ENCODE measurements at regions of chr16 and their contacts with region 1.

Region 1: GRCh38 chr16:11797166-11797956 is at the start of gene ZC3H7A:
- DNase-seq: peak; percentile 99
- H3K4me3 ChIP-seq: peak within 1 kb of the TSS; percentile 76 to 97 (median 94)
- H3K27ac ChIP-seq: peak within 1 kb of the TSS; percentile 98 to 99 (median 99)
- H3K4me1 ChIP-seq: peaks cover 61 to 73% (median 65%) of the 10 kb centered on the region in 4 donors
- H3K27me3 ChIP-seq: no peaks in the 10 kb centered on the region
- CTCF ChIP-seq: peak; percentile 86 to 97 (median 92)
- EP300 ChIP-seq: no peak
- POLR2A ChIP-seq: peak; percentile 85
- total RNA-seq, gene ZC3H7A: 51.1 to 61.0 (median 61.0) TPM

Region 2: DNA sequence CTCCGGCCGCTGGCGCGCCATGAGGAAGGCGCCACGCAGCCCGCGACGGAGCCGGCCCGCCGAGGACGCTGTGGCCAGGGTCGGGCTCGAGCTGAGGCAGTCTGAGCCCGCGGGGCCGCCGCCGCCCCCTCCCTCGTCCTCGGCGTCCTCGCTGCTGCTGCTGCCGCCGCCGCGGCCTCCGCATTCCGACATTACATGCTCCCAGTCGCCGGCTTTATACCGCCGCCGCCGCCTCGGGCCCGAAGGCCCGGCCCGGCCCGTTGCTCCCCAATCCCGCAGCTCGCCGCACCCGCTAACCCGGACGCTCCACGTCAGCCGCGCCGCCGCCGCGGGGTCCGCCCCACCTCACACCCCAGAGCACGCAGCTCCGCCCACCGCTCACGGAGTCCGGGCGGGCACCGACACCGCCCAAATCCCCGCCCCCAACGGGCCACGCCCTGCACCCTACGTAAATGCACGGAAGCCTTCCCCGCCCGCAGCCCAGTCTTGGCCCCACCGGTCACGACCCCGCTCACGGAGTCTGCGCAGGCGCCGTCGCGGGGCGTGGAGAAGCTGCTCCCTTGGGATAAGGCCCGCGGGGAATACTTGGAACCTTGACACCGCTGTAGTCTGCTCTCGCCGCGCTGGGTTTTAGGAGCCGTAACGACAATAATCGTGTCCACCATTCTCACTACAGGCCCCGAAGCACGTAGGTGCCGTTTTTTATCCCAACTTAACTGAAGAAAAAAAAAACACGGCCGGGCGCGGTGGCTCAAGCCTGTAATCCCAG is 54.6 kb before region 1 on chr16 and contains the start of gene TXNDC11:
- intact Hi-C with region 1: loop called (anchors 2 kb)
- DNase-seq: peak; percentile 100
- H3K4me3 ChIP-seq: peak within 1 kb of the TSS; percentile 89 to 99 (median 95)
- H3K27ac ChIP-seq: peak within 1 kb of the TSS; percentile 98 to 100 (median 99)
- H3K4me1 ChIP-seq: peaks cover 28 to 52% (median 51%) of the 10 kb centered on the region in 4 donors
- H3K27me3 ChIP-seq: no peaks in the 10 kb centered on the region
- CTCF ChIP-seq: no peak
- EP300 ChIP-seq: peak; percentile 51
- POLR2A ChIP-seq: peak; percentile 93
- total RNA-seq, gene TXNDC11: 32.4 to 47.2 (median 38.2) TPM